IMR-90 (cell line): ENCODE measurements at regions of chr13 and their contacts with region 1.

Region 1: DNA sequence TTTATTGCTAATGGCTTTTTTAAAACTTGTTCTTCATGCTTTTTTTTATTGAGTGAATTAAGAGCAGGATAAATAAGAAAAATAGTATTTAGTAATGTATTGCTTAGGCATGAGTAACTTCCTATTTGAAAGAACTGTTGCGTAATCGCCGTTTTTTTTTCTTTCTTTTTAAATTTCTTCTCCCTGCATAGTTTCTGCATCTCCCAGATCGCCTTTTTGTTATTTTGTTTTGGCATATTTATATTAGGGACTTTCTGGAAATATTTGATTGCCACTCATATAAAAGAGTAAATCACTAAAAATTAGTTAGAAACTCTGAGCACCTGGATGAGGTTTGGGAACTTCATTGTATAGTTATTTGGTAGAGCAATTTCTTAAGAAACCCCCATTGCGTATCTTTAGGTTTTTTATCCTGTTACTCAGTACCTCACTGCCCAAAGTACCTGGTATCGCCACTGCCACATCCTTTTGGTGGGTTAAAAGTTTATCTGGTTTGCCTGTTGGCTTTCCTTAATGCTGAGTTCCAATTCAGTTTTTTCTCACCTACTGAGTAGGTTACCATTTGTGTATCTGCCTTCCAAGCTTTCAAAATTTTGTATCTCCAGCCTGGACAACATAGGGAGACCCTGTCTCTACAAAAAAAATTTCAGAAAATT is 36.2 kb upstream of the LPAR6 start:
- DNase-seq: peak; percentile 80
- ATAC-seq: peak; percentile 48
- H3K4me3 ChIP-seq: no peak overlapping the region
- H3K27ac ChIP-seq: peak overlapping the region; percentile 92
- H3K4me1 ChIP-seq: peaks cover 17% of the 10 kb centered on the region
- H3K27me3 ChIP-seq: no peaks in the 10 kb centered on the region
- CTCF ChIP-seq: no peak
- POLR2A ChIP-seq: no peak
- RAD21 ChIP-seq: no peak

Region 2: DNA sequence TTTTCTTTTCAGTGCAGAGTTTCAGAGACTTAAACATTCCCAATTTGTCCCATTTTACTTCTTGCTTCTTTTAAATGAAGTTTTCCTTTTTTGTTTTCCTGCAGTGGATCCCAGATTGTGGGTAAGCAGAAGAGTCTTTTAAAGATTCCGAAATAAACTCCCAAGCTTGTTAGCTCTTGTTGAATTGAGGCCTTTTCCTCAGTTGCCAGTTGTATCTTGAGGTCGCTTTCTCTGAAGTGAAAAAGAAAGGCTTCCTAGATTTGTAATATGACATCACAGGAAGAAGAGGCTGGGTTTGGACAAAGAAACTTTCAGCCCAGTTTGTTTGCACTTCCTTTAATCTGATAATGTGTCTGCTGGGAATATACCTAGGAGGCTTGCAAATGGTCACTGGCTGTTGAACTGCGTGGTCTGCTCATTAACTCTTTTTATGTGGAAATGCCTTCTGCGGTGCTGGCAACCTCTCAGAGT is 36.2 kb before region 1 on chr13 and contains the start of gene LPAR6:
- CTCF ChIA-PET with region 1: no interaction called
- POLR2A ChIA-PET with region 1: interaction called, 3 read pairs
- dilution Hi-C with region 1: no loop called
- in situ Hi-C with region 1: no loop called
- intact Hi-C with region 1: loop called (anchors 1 kb)
- DNase-seq: peak; percentile 73
- ATAC-seq: peak; percentile 77
- H3K4me3 ChIP-seq: peak within 1 kb of the TSS; percentile 90
- H3K27ac ChIP-seq: peak within 1 kb of the TSS; percentile 83; the same call in 1 of the 2 replicates
- H3K4me1 ChIP-seq: no peaks in the 10 kb centered on the region
- H3K27me3 ChIP-seq: no peaks in the 10 kb centered on the region
- CTCF ChIP-seq: no peak
- POLR2A ChIP-seq: no peak
- RAD21 ChIP-seq: no peak
- total RNA-seq, gene LPAR6: 1.4 and 4.4 TPM in 2 replicates

Region 3: DNA sequence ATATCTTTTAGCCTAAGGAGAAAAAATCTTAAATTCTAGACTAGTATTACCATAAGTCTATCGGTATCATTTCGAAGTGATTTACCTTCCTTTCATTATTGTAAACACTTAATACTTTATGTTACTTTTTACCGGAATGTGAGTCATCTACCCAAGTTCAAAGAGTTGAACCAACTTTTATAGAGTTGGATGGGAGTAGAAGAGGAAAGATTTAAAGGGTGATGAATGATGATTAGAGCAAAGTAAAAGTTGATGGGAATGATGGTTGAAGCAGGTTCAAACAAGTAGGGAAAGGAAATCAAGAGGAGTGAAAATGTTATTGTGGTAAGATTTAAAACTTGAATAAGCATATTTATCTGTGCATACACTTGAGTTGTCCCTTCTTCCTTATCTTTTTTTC is 24.9 kb before region 1 on chr13:
- CTCF ChIA-PET with region 1: no interaction called
- POLR2A ChIA-PET with region 1: no interaction called
- dilution Hi-C with region 1: no loop called
- in situ Hi-C with region 1: no loop called
- intact Hi-C with region 1: no loop called
- DNase-seq: no peak
- ATAC-seq: no peak
- H3K4me3 ChIP-seq: no peak overlapping the region
- H3K27ac ChIP-seq: no peak overlapping the region
- H3K4me1 ChIP-seq: no peaks in the 10 kb centered on the region
- H3K27me3 ChIP-seq: no peaks in the 10 kb centered on the region
- CTCF ChIP-seq: no peak
- POLR2A ChIP-seq: no peak
- RAD21 ChIP-seq: no peak